Psoas muscle (tissue), 8 donors: ENCODE measurements at regions of chr3 and their contacts with region 1.

Region 1: GRCh38 chr3:109081746-109082510 is 36.0 kb downstream of the MORC1 start:
- DNase-seq: no peak
- ATAC-seq: peak; percentile 58 to 82 (median 78)
- H3K4me3 ChIP-seq: no peak overlapping the region
- H3K27ac ChIP-seq: no peak overlapping the region
- H3K4me1 ChIP-seq: no peaks in the 10 kb centered on the region
- H3K27me3 ChIP-seq: no peaks in the 10 kb centered on the region
- CTCF ChIP-seq: peak; percentile 64

Region 2: GRCh38 chr3:108662130-108662738 is 419.7 kb before region 1 on chr3:
- intact Hi-C with region 1: loop called in 1 of 2 experiments (anchors 10 kb)
- DNase-seq: no peak
- ATAC-seq: peak; percentile 71 to 93 (median 88)
- H3K4me3 ChIP-seq: no peak overlapping the region
- H3K27ac ChIP-seq: no peak overlapping the region
- H3K4me1 ChIP-seq: peaks cover 14% of the 10 kb centered on the region
- H3K27me3 ChIP-seq: no peaks in the 10 kb centered on the region
- CTCF ChIP-seq: peak; percentile 85

Region 3: GRCh38 chr3:109023656-109024254 is 58.2 kb before region 1 on chr3:
- intact Hi-C with region 1: loop called (anchors 2 kb)
- DNase-seq: no peak
- ATAC-seq: peak in 2 of 4 donors; percentile 44 to 49
- H3K4me3 ChIP-seq: no peak overlapping the region
- H3K27ac ChIP-seq: no peak overlapping the region
- H3K4me1 ChIP-seq: no peaks in the 10 kb centered on the region
- H3K27me3 ChIP-seq: no peaks in the 10 kb centered on the region
- CTCF ChIP-seq: peak; percentile 77